Caco-2 (cell line): ENCODE measurements at regions of chr13 and their contacts with region 1.

Region 1: GRCh38 chr13:94362411-94362909 is 117.0 kb downstream of the DCT start:
- DNase-seq: peak; percentile 64 to 74
- H3K4me3 ChIP-seq: no peak overlapping the region
- H3K4me3 Mint-ChIP-seq: no peak overlapping the region
- H3K27ac Mint-ChIP-seq: no peak overlapping the region
- H3K4me1 ChIP-seq: no peaks in the 10 kb centered on the region
- H3K4me1 Mint-ChIP-seq: no peaks in the 10 kb centered on the region
- H3K27me3 ChIP-seq: no peaks in the 10 kb centered on the region
- H3K27me3 Mint-ChIP-seq: peaks cover 20% of the 10 kb centered on the region
- CTCF ChIP-seq: peak; percentile 80 to 82

Region 2: GRCh38 chr13:92967923-92968322 is 1394.5 kb before region 1 on chr13:
- CTCF ChIA-PET with region 1: no interaction called
- POLR2A ChIA-PET with region 1: no interaction called
- intact Hi-C with region 1: loop called (anchors 2 kb)
- DNase-seq: peak in 1 of 2 experiments; percentile 11
- H3K4me3 ChIP-seq: no peak overlapping the region
- H3K4me3 Mint-ChIP-seq: no peak overlapping the region
- H3K27ac Mint-ChIP-seq: no peak overlapping the region
- H3K4me1 ChIP-seq: no peaks in the 10 kb centered on the region
- H3K4me1 Mint-ChIP-seq: no peaks in the 10 kb centered on the region
- H3K27me3 ChIP-seq: no peaks in the 10 kb centered on the region
- H3K27me3 Mint-ChIP-seq: no peaks in the 10 kb centered on the region
- CTCF ChIP-seq: peak; percentile 17 to 46

Region 3: DNA sequence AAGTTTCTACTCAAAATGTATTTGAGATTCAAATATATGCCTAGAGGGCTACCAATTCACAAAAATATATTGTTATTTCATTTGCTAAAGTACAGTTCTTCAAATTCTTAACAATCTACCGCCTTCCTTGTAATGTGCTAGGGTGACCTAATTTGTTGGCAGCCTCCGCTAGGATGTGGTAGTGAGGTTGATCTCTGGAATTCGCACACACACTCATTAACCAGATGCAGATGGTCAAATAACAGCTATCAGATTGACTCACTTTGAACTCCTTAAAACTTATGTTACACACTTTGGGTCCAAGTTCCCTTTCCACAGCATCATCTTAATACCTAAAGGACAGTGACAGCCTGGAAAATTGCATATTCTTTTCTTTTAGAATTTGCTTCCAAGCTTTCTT is 250.2 kb before region 1 on chr13:
- CTCF ChIA-PET with region 1: no interaction called
- POLR2A ChIA-PET with region 1: no interaction called
- intact Hi-C with region 1: loop called (anchors 10 kb)
- DNase-seq: no peak
- H3K4me3 ChIP-seq: no peak overlapping the region
- H3K4me3 Mint-ChIP-seq: no peak overlapping the region
- H3K27ac Mint-ChIP-seq: no peak overlapping the region
- H3K4me1 ChIP-seq: no peaks in the 10 kb centered on the region
- H3K4me1 Mint-ChIP-seq: no peaks in the 10 kb centered on the region
- H3K27me3 ChIP-seq: no peaks in the 10 kb centered on the region
- H3K27me3 Mint-ChIP-seq: no peaks in the 10 kb centered on the region
- CTCF ChIP-seq: no peak

Region 4: DNA sequence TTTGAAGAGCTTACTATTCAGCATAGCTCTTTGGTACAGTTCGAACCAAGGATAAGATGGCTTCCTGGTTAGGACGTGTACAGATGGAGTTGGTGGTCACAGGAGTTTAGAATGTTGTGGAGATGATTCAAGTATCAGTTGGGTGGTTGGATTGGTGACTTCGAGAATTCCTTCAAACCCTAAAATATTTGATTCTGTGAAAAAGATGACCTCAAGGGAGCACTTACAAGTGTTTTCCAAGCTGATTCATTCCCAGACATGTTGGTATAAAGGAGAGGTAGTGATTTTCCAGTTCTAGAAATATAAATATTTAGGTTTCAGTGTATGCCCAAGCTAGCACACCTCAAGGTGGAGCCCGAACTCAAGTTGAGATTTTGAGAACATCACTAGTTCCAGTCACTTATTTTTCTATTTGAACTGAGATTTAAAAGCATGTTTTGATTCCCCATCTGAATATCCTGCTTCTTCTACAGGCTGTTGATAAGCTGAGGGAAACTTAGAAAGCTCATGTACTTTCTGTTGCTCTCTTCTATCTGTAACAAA is 189.1 kb before region 1 on chr13:
- CTCF ChIA-PET with region 1: no interaction called
- POLR2A ChIA-PET with region 1: no interaction called
- intact Hi-C with region 1: loop called (anchors 1 kb)
- DNase-seq: no peak
- H3K4me3 ChIP-seq: no peak overlapping the region
- H3K4me3 Mint-ChIP-seq: no peak overlapping the region
- H3K27ac Mint-ChIP-seq: no peak overlapping the region
- H3K4me1 ChIP-seq: no peaks in the 10 kb centered on the region
- H3K4me1 Mint-ChIP-seq: no peaks in the 10 kb centered on the region
- H3K27me3 ChIP-seq: no peaks in the 10 kb centered on the region
- H3K27me3 Mint-ChIP-seq: peaks cover 3% of the 10 kb centered on the region
- CTCF ChIP-seq: no peak

Region 5: GRCh38 chr13:94192431-94192975 is 170.0 kb before region 1 on chr13:
- CTCF ChIA-PET with region 1: no interaction called
- POLR2A ChIA-PET with region 1: no interaction called
- intact Hi-C with region 1: loop called (anchors 1 kb)
- DNase-seq: peak; percentile 40 to 42
- H3K4me3 ChIP-seq: no peak overlapping the region
- H3K4me3 Mint-ChIP-seq: no peak overlapping the region
- H3K27ac Mint-ChIP-seq: no peak overlapping the region
- H3K4me1 ChIP-seq: no peaks in the 10 kb centered on the region
- H3K4me1 Mint-ChIP-seq: no peaks in the 10 kb centered on the region
- H3K27me3 ChIP-seq: no peaks in the 10 kb centered on the region
- H3K27me3 Mint-ChIP-seq: peaks cover 3% of the 10 kb centered on the region
- CTCF ChIP-seq: peak; percentile 42 to 47

Region 6: GRCh38 chr13:94268661-94269060 is 93.8 kb before region 1 on chr13:
- CTCF ChIA-PET with region 1: no interaction called
- POLR2A ChIA-PET with region 1: no interaction called
- intact Hi-C with region 1: loop called (anchors 1 kb)
- DNase-seq: no peak
- H3K4me3 ChIP-seq: no peak overlapping the region
- H3K4me3 Mint-ChIP-seq: no peak overlapping the region
- H3K27ac Mint-ChIP-seq: no peak overlapping the region
- H3K4me1 ChIP-seq: no peaks in the 10 kb centered on the region
- H3K4me1 Mint-ChIP-seq: no peaks in the 10 kb centered on the region
- H3K27me3 ChIP-seq: no peaks in the 10 kb centered on the region
- H3K27me3 Mint-ChIP-seq: peaks cover 7% of the 10 kb centered on the region
- CTCF ChIP-seq: no peak

Region 7: DNA sequence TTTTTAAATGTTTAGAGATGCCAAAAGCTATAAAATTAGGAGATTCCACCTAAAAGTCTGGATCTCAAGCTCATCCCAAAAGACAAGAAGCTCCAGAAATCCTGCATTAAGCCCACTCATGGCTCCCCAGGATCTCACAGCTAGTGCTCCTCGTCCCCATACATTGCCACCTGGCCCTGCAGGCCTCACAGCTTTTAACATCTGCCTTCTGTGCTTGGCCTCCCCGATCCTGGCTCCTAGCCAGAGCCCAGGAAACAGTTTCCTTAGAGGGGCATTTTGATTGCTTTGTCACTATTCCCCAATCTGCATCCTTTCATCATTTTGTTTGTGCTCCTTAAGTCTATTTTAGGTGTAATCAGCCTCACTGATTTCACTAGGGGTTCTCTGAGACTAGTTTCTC is 131.6 kb after region 1 on chr13:
- CTCF ChIA-PET with region 1: no interaction called
- POLR2A ChIA-PET with region 1: no interaction called
- intact Hi-C with region 1: no loop called
- DNase-seq: no peak
- H3K4me3 ChIP-seq: no peak overlapping the region
- H3K4me3 Mint-ChIP-seq: no peak overlapping the region
- H3K27ac Mint-ChIP-seq: no peak overlapping the region
- H3K4me1 ChIP-seq: no peaks in the 10 kb centered on the region
- H3K4me1 Mint-ChIP-seq: no peaks in the 10 kb centered on the region
- H3K27me3 ChIP-seq: no peaks in the 10 kb centered on the region; the same call in 1 of the 2 replicates
- H3K27me3 Mint-ChIP-seq: peaks cover 3% of the 10 kb centered on the region
- CTCF ChIP-seq: no peak

Region 8: DNA sequence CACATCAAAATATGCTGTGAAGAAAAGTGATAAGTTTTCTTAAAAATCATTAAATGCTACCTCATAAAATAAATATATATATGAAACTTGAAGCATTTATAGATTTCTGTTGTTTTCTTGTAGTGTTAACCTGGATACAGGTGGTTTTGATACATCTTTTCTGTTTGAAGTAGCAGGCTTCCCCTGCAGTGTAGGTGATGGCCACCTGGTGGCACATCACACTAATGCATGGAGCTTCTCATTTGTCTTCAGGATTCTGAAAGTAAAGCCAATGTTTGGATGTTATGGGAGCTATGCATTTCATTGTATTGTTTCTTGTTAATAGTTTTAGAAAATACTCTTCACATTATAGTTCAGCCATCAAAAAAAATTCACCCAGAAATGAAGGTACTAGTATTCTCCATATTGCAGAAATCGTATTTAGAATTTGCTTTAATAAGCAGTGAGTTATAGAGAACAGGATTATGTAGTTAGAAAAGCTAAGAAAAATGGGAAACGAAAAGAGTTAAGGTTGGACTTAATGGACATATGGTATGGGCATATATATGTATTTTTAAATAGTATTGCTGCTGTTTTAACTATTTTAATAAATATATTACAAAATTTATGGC is 257.9 kb after region 1 on chr13:
- CTCF ChIA-PET with region 1: no interaction called
- POLR2A ChIA-PET with region 1: no interaction called
- intact Hi-C with region 1: loop called (anchors 5 kb)
- DNase-seq: peak in 1 of 2 experiments; percentile 57
- H3K4me3 ChIP-seq: no peak overlapping the region
- H3K4me3 Mint-ChIP-seq: no peak overlapping the region
- H3K27ac Mint-ChIP-seq: no peak overlapping the region
- H3K4me1 ChIP-seq: no peaks in the 10 kb centered on the region
- H3K4me1 Mint-ChIP-seq: no peaks in the 10 kb centered on the region
- H3K27me3 ChIP-seq: no peaks in the 10 kb centered on the region
- H3K27me3 Mint-ChIP-seq: no peaks in the 10 kb centered on the region
- CTCF ChIP-seq: peak; percentile 80 to 89